OCI-LY7 (cell line): ENCODE measurements at regions of chr10 and their contacts with region 1.

Region 1: GRCh38 chr10:72273410-72274212 is at the start of gene DDIT4:
- DNase-seq: peak; percentile 99
- H3K4me3 ChIP-seq: peak within 1 kb of the TSS; percentile 77
- H3K27ac ChIP-seq: peak within 1 kb of the TSS; percentile 22
- H3K4me1 ChIP-seq: peaks cover 39% of the 10 kb centered on the region
- CTCF ChIP-seq: no peak
- total RNA-seq, gene DDIT4: 102 and 105 TPM in 2 replicates

Region 2: DNA sequence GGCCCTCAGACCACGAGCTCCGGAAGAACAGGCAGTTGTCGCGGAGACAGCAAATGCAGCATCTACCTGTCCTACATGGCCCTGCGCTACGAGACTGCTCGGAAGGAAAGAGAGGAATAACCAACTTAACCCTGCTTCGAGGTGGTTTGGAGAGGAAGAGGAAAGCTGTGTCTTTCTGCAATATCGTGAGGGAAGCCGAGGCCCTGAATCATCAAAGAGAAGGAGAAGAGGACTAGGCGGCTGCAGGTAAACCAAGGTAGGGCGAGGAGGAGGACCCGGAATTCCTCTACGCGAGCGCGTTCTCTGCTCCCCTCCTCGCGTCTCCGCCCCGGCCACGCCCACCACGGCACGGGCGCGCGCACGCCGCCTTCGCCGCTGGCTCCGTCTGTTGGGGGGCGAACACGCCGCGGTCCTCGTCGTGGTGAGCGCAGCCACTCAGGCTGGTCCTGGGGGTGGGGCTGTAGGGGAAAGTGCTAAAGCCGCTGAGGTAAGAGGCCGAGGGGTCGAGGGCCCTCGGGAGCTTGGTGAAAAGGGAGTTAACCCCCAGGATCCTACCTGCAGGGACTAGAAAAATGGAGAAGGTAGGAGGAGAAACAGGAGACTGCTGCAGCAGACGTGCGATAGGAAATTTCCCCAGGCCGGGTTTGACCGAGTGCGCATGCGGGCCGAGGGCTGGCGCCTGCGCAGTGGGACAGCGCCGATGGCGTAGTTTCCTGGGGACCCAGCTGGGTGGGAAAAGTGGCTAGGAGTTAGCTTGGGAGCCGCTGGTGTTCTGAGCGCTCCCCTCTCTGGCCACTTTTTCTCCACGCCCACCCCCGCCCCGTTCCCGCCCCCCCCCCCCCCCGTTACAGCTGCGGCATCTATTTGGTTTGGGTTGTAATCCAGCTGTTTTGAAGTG is 57.7 kb before region 1 on chr10 and contains the starts of genes ANAPC16 and ASCC1:
- CTCF ChIA-PET with region 1: interaction called, 5 read pairs
- POLR2A ChIA-PET with region 1: interaction called, 3 read pairs
- intact Hi-C with region 1: loop called (anchors 2 kb)
- DNase-seq: peak; percentile 94
- H3K4me3 ChIP-seq: peak within 1 kb of the TSS; percentile 82
- H3K27ac ChIP-seq: peak within 1 kb of the TSS; percentile 86
- H3K4me1 ChIP-seq: peaks cover 39% of the 10 kb centered on the region
- CTCF ChIP-seq: no peak
- total RNA-seq, gene ANAPC16: 48.4 and 68.0 TPM in 2 replicates
- total RNA-seq, gene ASCC1: 19.3 and 27.1 TPM in 2 replicates

Region 3: DNA sequence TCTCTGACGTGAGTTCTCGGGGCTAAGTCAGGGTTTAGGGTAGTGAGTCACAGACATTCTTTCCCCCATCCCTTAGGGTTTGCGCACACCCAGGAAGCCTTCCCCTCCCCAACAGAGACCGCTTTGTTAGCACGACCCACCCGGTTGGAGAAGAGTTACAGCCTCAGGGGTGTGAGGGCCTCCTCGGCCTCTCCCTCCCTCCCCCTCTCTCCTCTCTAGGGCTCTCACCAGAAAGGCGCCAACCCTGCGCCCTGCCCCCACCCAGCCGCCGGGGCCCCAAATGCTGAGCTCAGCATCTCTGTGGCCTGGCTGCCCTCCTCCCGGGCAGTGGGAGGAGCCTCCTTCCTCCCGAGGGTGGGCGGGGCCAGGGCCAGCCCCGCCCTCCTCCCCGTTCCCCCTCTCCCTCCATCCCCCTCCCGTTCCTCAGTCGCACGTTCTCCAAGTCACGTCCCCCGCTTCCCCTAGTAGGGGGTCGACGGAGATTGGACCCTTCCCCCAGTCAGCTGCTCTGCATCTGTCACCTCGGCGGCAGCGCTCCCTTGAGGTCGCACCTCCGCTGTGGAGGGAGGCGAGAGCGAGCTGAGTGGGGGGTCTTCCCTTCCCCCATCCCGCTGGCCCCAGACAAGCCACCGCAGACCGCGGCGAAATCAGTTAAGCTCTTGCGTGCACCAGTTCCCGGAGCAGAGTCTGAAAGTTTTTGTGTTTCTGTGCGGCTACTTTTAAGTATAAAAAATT is 12.9 kb before region 1 on chr10:
- CTCF ChIA-PET with region 1: interaction called, 6 read pairs
- POLR2A ChIA-PET with region 1: interaction called, 32 read pairs
- intact Hi-C with region 1: loop called (anchors 1 kb)
- DNase-seq: peak; percentile 91
- H3K4me3 ChIP-seq: peak overlapping the region; percentile 66
- H3K27ac ChIP-seq: peak overlapping the region; percentile 74
- H3K4me1 ChIP-seq: peaks cover 80% of the 10 kb centered on the region
- CTCF ChIP-seq: peak; percentile 43

Region 4: GRCh38 chr10:72297968-72298773 is 24.6 kb after region 1 on chr10:
- CTCF ChIA-PET with region 1: interaction called, 7 read pairs
- POLR2A ChIA-PET with region 1: interaction called, 8 read pairs
- intact Hi-C with region 1: loop called (anchors 2 kb)
- DNase-seq: peak; percentile 97
- H3K4me3 ChIP-seq: peak overlapping the region; percentile 71
- H3K27ac ChIP-seq: peak overlapping the region; percentile 83
- H3K4me1 ChIP-seq: peaks cover 36% of the 10 kb centered on the region
- CTCF ChIP-seq: no peak

Region 5: DNA sequence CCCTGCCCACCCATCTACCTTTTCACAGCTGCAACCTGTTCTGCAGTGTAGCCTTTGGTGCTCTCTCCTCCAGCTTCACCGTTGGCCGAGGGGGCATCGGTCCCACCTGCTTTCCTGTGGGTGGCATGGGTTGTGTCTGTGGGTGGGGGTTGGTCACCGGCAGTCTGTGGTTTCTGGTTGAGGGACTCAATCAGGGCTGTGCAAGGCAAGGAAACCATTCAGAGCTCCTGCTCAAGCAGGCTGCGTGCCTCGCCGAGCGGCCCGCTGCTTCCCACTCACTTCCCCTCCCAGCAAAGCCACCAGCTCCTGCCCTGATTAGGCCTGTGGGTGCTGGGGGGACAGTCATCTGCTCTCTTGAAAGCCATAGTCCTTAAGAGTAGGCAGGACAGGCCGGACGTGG is 71.3 kb after region 1 on chr10:
- CTCF ChIA-PET with region 1: no interaction called
- POLR2A ChIA-PET with region 1: no interaction called
- intact Hi-C with region 1: no loop called
- DNase-seq: no peak
- H3K4me3 ChIP-seq: no peak overlapping the region
- H3K27ac ChIP-seq: no peak overlapping the region
- H3K4me1 ChIP-seq: no peaks in the 10 kb centered on the region
- CTCF ChIP-seq: no peak

Region 6: DNA sequence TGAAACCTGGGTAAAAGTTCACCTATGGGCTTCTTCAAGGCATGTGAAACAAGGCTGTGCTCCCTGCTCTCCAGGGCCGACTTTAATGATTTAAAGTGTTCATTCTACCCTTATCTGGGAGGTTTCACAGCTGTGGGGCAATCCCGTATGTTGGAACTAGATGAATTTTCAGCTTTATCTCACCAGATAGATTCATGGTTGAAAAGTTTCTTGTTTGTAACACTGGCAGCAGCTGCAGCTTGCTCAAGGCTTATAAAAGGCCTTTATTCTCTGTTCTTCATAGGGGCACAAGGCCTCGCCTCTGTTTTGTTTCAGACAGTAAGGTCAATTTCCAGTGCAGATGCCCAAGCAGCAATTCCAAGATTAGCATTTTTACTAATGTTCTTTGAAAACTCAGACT is 151.5 kb after region 1 on chr10:
- CTCF ChIA-PET with region 1: no interaction called
- POLR2A ChIA-PET with region 1: no interaction called
- intact Hi-C with region 1: no loop called
- DNase-seq: no peak
- H3K4me3 ChIP-seq: no peak overlapping the region
- H3K27ac ChIP-seq: no peak overlapping the region
- H3K4me1 ChIP-seq: no peaks in the 10 kb centered on the region
- CTCF ChIP-seq: no peak